Activated CD4-positive, alpha-beta T cell treated with anti-CD3 and anti-CD28 coated beads, Interleukin-2, amount 10 ng/mL, durations not matched to agents 7 days and 5 days (primary cell): ENCODE measurements at regions of chr11 and their contacts with region 1.

Region 1: GRCh38 chr11:10455637-10456487 is 798 bp downstream of the AMPD3 start:
- DNase-seq: peak; percentile 87
- H3K4me3 Mint-ChIP-seq: peak overlapping the region; percentile 85
- H3K27ac Mint-ChIP-seq: peak overlapping the region; percentile 93
- H3K4me1 Mint-ChIP-seq: peaks cover 74% of the 10 kb centered on the region
- H3K27me3 Mint-ChIP-seq: no peaks in the 10 kb centered on the region

Region 2: GRCh38 chr11:10328314-10329090 is 127.4 kb before region 1 on chr11:
- CTCF ChIA-PET with region 1: no interaction called
- POLR2A ChIA-PET with region 1: no interaction called
- DNase-seq: no peak
- H3K4me3 Mint-ChIP-seq: no peak overlapping the region
- H3K27ac Mint-ChIP-seq: no peak overlapping the region
- H3K4me1 Mint-ChIP-seq: no peaks in the 10 kb centered on the region
- H3K27me3 Mint-ChIP-seq: peaks cover 7% of the 10 kb centered on the region

Region 3: DNA sequence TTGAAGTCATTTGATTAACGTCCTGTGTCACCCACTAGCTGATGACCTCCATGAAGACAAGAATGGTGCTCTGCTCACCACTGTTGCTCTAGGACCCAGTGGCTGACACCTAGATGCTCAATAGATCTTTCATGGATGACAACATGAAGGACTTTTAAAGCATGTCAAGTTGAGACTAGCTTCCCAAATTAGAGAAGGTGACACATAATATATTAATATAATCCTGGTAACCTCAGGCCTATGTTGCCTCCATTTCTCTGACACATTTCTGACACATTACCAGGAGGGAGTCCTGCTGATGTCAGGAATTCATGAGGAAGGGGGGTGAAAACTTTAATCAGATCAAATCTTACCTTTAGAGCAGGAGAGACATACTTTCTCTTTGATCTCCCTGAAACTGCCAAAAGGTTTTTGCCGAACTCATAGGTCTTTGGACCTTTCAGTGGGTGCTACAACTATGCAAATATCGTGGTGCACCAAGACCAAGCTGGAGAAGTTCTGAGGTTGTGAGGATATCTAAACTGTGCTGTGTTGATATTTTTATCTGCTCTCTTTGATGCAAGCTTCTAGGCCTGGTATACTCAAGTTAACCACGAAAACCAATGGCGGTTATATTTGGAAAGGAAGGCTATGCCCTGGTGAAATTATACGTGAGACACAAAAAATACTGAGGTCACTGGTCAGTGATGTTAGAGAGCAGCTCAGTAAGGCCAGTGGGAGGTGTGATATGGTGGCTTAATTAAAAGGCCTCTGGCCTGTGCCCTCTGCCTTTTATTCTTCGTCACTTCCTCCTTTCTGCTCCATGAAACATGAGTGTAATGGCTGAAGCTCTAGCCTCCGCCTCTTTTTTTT is 14.0 kb before region 1 on chr11:
- CTCF ChIA-PET with region 1: interaction called, 50 read pairs
- POLR2A ChIA-PET with region 1: no interaction called
- DNase-seq: peak; percentile 45
- H3K4me3 Mint-ChIP-seq: no peak overlapping the region
- H3K27ac Mint-ChIP-seq: peak overlapping the region; percentile 47
- H3K4me1 Mint-ChIP-seq: peaks cover 37% of the 10 kb centered on the region
- H3K27me3 Mint-ChIP-seq: peaks cover 9% of the 10 kb centered on the region